GM12878 (cell line): ENCODE measurements at regions of chr10 and their contacts with region 1.

Region 1: DNA sequence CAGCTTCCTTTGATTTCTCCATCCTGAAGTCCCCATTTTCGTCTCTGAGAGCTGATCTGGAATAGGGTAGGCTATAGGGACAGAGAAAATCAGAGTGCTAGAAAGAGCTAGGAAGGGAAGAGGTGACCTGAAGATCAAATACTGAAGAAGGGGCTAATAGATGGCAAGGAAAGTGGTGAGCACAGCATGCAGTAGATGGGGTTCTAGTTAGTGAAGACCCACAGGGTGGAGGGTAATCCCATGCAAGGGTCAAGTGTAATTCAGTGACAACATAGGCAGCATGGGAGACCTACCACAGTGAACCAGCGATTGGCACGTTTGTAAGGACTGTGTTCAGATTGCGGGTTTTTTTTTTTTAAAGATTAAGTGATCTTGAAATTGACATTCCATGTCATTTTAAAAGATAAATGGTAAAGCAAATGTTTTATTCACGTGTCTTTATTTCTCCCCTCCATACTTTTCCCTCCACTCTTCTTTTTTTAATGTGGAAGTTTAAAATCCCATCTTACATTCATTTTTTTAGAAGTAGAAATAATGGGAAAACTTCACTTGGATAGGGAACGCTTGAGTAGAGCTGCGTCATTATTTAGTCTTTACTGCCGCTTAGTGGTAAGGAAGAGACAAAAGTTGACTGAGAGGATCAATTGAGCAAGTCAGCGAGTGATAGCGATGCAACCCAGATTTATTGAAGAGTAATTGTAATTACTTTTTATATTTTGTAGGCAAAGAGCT is 21.0 kb upstream of the ABI1 start:
- DNase-seq: no peak
- ATAC-seq: peak; percentile 96
- H3K4me3 ChIP-seq: no peak overlapping the region
- H3K27ac ChIP-seq: no peak overlapping the region
- H3K4me1 ChIP-seq: no peaks in the 10 kb centered on the region
- H3K27me3 ChIP-seq: no peaks in the 10 kb centered on the region
- CTCF ChIP-seq: peak; percentile 72 to 80 (median 77)
- EP300 ChIP-seq: no peak
- POLR2A ChIP-seq: no peak
- RAD21 ChIP-seq: peak; percentile 98

Region 2: GRCh38 chr10:25707976-25708671 is 1173.6 kb before region 1 on chr10:
- CTCF ChIA-PET with region 1: no interaction called
- POLR2A ChIA-PET with region 1: no interaction called
- RAD21 ChIA-PET with region 1: no interaction called
- SMC1A ChIA-PET with region 1: no interaction called
- in situ Hi-C with region 1: no loop called
- intact Hi-C with region 1: no loop called
- DNase-seq: no peak
- ATAC-seq: no peak
- H3K4me3 ChIP-seq: no peak overlapping the region
- H3K27ac ChIP-seq: no peak overlapping the region
- H3K4me1 ChIP-seq: no peaks in the 10 kb centered on the region
- H3K27me3 ChIP-seq: no peaks in the 10 kb centered on the region
- CTCF ChIP-seq: no peak
- EP300 ChIP-seq: no peak
- POLR2A ChIP-seq: no peak
- RAD21 ChIP-seq: no peak

Region 3: GRCh38 chr10:26682931-26683330 is 198.8 kb before region 1 on chr10:
- CTCF ChIA-PET with region 1: interaction called, 22 read pairs
- POLR2A ChIA-PET with region 1: no interaction called
- RAD21 ChIA-PET with region 1: interaction called, 6 read pairs
- SMC1A ChIA-PET with region 1: interaction called, 25 read pairs
- in situ Hi-C with region 1: no loop called
- intact Hi-C with region 1: loop called (anchors 2 kb)
- DNase-seq: no peak
- ATAC-seq: no peak
- H3K4me3 ChIP-seq: no peak overlapping the region
- H3K27ac ChIP-seq: no peak overlapping the region
- H3K4me1 ChIP-seq: no peaks in the 10 kb centered on the region
- H3K27me3 ChIP-seq: no peaks in the 10 kb centered on the region
- CTCF ChIP-seq: no peak
- EP300 ChIP-seq: no peak
- POLR2A ChIP-seq: no peak
- RAD21 ChIP-seq: no peak

Region 4: GRCh38 chr10:26725837-26726727 is 155.7 kb before region 1 on chr10:
- CTCF ChIA-PET with region 1: interaction called, 252 read pairs
- POLR2A ChIA-PET with region 1: interaction called, 5 read pairs
- RAD21 ChIA-PET with region 1: interaction called, 175 read pairs
- SMC1A ChIA-PET with region 1: interaction called, 220 read pairs
- in situ Hi-C with region 1: loop called (anchors 5 kb)
- intact Hi-C with region 1: loop called (anchors 1 kb)
- DNase-seq: no peak
- ATAC-seq: peak; percentile 81
- H3K4me3 ChIP-seq: no peak overlapping the region
- H3K27ac ChIP-seq: no peak overlapping the region
- H3K4me1 ChIP-seq: no peaks in the 10 kb centered on the region
- H3K27me3 ChIP-seq: no peaks in the 10 kb centered on the region
- CTCF ChIP-seq: peak; percentile 70 to 89 (median 76); a peak in 5 of 6 replicates
- EP300 ChIP-seq: no peak
- POLR2A ChIP-seq: no peak
- RAD21 ChIP-seq: peak; percentile 97

Region 5: DNA sequence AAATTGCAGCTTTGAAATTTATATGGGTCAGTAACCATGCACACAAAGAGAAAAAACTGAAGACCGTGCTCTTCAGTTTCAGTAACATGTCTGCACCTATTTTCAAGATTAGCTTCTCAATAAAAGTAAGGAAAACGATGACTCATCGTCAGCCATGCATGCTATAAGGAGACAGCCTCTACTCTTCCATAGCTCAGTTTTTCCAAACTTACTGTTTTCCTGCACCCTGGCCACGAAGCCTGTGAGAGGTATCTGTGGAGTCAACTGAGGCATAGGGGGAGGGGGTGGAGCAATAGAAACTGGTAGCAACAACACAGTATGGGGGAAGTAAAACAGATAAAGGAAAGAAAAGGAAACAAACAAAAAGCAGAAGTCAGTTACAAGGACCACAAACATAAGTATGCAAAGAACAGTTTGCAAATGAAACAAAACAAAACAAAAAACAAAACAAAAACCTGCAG is 126.3 kb before region 1 on chr10:
- CTCF ChIA-PET with region 1: interaction called, 9 read pairs
- POLR2A ChIA-PET with region 1: no interaction called
- RAD21 ChIA-PET with region 1: interaction called, 3 read pairs
- SMC1A ChIA-PET with region 1: interaction called, 13 read pairs
- in situ Hi-C with region 1: no loop called
- intact Hi-C with region 1: no loop called
- DNase-seq: peak; percentile 67
- ATAC-seq: peak; percentile 98
- H3K4me3 ChIP-seq: peak overlapping the region; percentile 55; the same call in 1 of the 2 replicates
- H3K27ac ChIP-seq: peak overlapping the region; percentile 49
- H3K4me1 ChIP-seq: peaks cover 9% of the 10 kb centered on the region; the same call in 1 of the 2 replicates
- H3K27me3 ChIP-seq: no peaks in the 10 kb centered on the region
- CTCF ChIP-seq: no peak
- EP300 ChIP-seq: peak in 1 of 2 experiments; percentile 22; a peak in 1 of 4 replicates
- POLR2A ChIP-seq: no peak
- RAD21 ChIP-seq: no peak